Thyroid gland (tissue), 4 donors: ENCODE measurements at regions of chr13 and their contacts with region 1.

Region 1: DNA sequence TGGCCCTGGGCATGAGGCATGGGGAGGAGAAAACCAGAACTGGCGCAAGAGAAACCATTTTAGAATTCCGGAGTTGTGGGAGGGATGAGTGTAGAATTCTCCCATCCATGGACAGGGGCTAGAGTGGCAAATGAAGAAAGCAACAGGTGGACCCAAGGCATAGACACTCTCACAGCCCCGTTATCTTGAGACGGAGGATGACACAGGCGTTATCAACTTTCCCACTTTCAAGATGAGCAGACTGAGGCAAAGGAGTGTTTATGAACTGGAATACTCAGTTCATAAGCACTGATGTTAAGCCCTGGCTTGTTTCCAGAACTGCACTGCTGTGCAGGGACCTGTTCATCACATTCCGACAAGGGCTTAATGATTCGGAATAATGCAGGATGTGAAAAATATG is 1.1 kb upstream of the GTF3A start:
- DNase-seq: peak in 1 of 2 donors; percentile 16
- H3K4me3 ChIP-seq: no peak overlapping the region
- H3K27ac ChIP-seq: no peak overlapping the region
- H3K4me1 ChIP-seq: peaks cover 22 to 33% of the 10 kb centered on the region in 2 donors
- H3K27me3 ChIP-seq: no peaks in the 10 kb centered on the region
- CTCF ChIP-seq: no peak
- POLR2A ChIP-seq: no peak

Region 2: GRCh38 chr13:27104606-27105005 is 318.7 kb before region 1 on chr13:
- intact Hi-C with region 1: no loop called
- DNase-seq: no peak
- H3K4me3 ChIP-seq: no peak overlapping the region
- H3K27ac ChIP-seq: no peak overlapping the region
- H3K4me1 ChIP-seq: no peaks in the 10 kb centered on the region
- H3K27me3 ChIP-seq: no peaks in the 10 kb centered on the region
- CTCF ChIP-seq: no peak
- POLR2A ChIP-seq: no peak

Region 3: GRCh38 chr13:27455331-27455855 is 32.1 kb after region 1 on chr13:
- intact Hi-C with region 1: loop called (anchors 2 kb)
- DNase-seq: no peak
- H3K4me3 ChIP-seq: peak overlapping the region in 1 of 3 donors; percentile 9
- H3K27ac ChIP-seq: peak overlapping the region in 2 of 3 donors; percentile 38 to 60
- H3K4me1 ChIP-seq: peaks cover 5 to 13% of the 10 kb centered on the region in 2 donors
- H3K27me3 ChIP-seq: no peaks in the 10 kb centered on the region
- CTCF ChIP-seq: no peak
- POLR2A ChIP-seq: no peak